Heart right ventricle (tissue), 16 donors: ENCODE measurements at regions of chr1 and their contacts with region 1.

Region 1: DNA sequence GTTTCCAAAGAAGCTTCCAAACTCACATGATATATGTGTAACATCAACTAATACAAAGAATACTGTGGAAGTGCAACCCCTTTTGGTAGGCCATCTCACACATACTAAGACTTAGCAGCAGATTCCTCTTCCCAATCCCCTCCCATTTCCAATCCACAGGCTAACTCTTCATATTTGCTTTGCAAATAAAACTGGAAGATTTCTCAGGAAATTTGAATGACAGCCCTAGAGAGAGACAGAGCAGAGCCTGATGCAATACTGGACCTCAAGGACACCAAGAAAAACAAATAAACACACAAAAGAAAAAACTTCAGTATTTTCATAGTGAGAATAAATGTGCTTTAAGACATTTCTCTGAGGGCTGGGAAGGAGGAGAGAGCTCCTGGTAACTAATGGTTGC is 190.3 kb upstream of the BRINP3 start:
- DNase-seq: no peak
- ATAC-seq: no peak
- H3K4me3 ChIP-seq: no peak overlapping the region
- H3K27ac ChIP-seq: no peak overlapping the region
- H3K4me1 ChIP-seq: no peaks in the 10 kb centered on the region
- H3K27me3 ChIP-seq: no peaks in the 10 kb centered on the region
- CTCF ChIP-seq: no peak

Region 2: DNA sequence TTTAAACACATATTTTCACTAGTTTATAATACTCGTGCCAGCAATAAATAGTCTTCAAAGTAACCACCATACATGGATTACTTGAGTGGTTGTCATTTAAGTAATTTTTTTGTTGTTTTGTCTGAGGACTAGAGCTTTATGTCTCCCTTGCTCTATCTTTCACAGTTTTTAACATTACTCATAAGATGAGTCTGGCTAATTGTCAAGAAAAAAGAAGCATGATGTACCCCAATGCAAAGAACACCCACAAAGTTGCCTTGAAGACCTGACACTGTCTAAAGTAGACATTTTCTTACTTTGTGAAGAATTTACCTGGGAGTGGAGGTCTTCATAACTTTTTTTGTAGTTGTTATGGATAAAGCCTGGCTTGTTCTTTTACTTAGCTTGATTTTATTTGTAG is 20.2 kb after region 1 on chr1:
- intact Hi-C with region 1: loop called in 1 of 10 experiments (anchors 2 kb)
- DNase-seq: no peak
- ATAC-seq: no peak
- H3K4me3 ChIP-seq: no peak overlapping the region
- H3K27ac ChIP-seq: no peak overlapping the region
- H3K4me1 ChIP-seq: no peaks in the 10 kb centered on the region
- H3K27me3 ChIP-seq: no peaks in the 10 kb centered on the region
- CTCF ChIP-seq: no peak

Region 3: GRCh38 chr1:190792873-190793272 is 125.0 kb after region 1 on chr1:
- intact Hi-C with region 1: no loop called
- DNase-seq: no peak
- ATAC-seq: no peak
- H3K4me3 ChIP-seq: no peak overlapping the region
- H3K27ac ChIP-seq: no peak overlapping the region
- H3K4me1 ChIP-seq: no peaks in the 10 kb centered on the region
- H3K27me3 ChIP-seq: no peaks in the 10 kb centered on the region
- CTCF ChIP-seq: no peak